ENCODE measurements at regions of chr7 and their contacts with region 1.

Region 1: GRCh38 chr7:50142425-50143017 is 49.5 kb upstream of the ZPBP start:
- DNase-seq: no peak
- CTCF ChIP-seq: peak; percentile 67

Region 2: DNA sequence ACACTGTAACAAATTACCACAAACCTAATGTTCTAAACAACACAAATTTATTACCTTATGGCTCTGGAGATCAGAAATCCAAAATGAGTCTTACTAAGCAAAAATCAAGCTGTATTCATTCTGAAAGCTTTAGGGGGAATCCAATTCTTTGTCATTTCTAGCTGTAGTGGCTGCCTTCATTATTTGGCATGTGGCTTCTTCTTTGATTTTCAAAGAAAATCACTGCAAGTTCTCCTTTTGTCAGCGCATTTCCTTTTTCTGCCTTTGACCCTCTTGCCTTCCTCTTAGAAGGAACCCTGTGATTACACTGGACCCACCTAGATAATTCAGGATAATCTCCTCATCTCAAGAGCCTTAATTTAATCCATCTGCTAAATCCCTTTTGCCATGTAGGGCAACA is 86.4 kb before region 1 on chr7:
- CTCF ChIA-PET with region 1: no interaction called
- POLR2A ChIA-PET with region 1: no interaction called
- DNase-seq: no peak
- CTCF ChIP-seq: no peak

Region 3: DNA sequence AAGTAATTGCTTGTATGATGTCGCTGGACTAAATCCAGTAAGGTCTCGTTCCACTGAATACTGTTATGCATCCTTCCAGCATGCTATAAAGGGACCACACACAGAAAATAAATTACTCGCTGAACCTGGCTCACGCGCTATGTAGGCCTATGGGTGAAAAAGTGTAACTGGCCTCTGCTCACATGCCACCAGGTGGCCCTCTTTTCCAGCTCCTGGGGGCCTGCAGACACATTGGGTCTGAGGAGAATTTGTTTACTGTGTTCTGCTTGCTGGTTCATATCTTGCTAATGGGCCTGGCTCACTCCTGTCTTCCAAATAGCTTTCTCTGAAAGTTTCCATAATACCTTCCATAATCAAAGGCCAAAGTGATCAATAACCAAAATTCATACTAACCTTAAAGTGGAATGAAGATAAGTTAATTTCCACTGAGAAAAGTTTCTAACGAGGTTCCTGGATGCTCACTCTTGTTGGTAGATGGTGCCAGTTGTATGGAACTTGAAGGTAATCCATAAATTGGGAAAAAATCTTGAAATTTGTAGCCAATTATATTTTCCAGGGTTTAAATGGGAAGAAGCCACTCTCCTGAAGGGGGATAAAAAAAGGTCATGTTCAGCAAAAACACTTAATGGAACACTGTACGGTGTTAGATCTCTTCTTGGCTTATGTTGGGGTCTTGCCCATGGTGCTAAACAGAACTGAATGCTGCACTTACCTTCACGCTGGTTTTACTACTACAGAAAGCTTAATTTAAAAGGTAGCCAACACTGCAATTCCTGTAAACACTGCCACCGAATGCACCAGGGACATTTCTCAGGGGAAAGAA is 22.5 kb before region 1 on chr7:
- CTCF ChIA-PET with region 1: interaction called, 18 read pairs
- POLR2A ChIA-PET with region 1: no interaction called
- DNase-seq: peak; percentile 22
- CTCF ChIP-seq: peak; percentile 38

Region 4: GRCh38 chr7:50270531-50271018 is 128.1 kb after region 1 on chr7:
- CTCF ChIA-PET with region 1: no interaction called
- POLR2A ChIA-PET with region 1: no interaction called
- DNase-seq: peak; percentile 34
- CTCF ChIP-seq: no peak

Region 5: DNA sequence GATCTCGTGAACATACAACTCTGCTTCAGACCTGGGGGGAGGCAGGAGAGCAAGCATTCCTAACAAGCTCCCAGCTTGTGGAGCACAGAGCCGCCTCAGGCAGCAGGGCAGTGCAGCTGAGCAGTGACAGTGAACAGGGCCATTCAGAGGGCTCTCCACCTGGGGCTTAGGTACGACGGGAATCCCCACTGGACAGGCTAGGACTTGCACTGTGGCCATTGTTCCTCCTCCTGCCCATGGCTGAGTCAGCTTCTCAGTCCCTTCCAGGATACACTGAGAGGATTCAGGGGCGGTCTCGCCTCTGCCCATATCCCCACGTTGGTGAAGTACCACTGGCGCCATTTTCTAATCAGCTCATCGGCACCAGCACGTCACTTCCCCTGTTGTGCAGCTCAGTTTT is 236.6 kb after region 1 on chr7:
- CTCF ChIA-PET with region 1: no interaction called
- POLR2A ChIA-PET with region 1: no interaction called
- DNase-seq: no peak
- CTCF ChIP-seq: no peak